ENCODE measurements at regions of chr15 and their contacts with region 1.

Region 1: DNA sequence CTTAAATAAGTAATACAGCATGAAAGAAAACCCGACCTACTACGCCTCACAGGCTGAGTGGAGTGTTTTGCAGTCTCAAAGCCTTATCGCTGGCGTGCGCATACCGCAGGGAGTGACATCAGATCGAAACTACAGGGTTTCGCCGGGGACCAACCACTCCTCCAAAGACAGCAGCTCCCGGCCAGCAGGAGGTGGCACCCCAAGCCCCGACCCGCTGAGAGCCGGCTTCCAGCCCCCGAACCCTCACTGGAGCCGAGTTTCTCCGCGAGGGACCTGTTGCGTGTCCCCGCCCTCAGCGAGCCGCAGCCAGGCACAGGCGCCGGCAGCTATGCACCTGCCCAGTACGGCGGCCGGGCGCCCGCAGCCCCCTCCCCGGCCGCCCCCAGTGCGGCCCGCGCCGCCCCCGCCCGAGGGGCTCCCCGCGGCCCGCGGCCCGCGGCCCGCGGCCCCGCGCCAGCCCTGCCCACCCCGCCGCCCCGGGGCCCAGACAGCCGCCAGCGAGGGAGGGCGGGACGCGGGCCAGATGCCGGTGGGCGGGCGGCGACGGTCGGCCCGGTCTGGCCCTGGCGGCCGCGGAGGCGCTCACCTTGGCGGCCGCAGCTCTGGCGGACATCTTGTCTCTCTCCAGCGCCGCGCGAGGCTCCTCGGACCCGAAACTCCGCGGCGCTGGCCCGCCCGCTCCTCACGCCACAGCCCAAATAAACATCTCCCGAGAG is 694 bp downstream of the TJP1 start:
- DNase-seq: peak in 8 of 10 donors; percentile 23 to 80 (median 57)
- H3K4me3 ChIP-seq: peak overlapping the region; percentile 53 to 93 (median 80)
- H3K27ac ChIP-seq: peak overlapping the region; percentile 61 to 97 (median 91)
- H3K27me3 ChIP-seq: no peaks in the 10 kb centered on the region
- CTCF ChIP-seq: peak in 13 of 56 donors; percentile 6 to 21 (median 12)

Region 2: DNA sequence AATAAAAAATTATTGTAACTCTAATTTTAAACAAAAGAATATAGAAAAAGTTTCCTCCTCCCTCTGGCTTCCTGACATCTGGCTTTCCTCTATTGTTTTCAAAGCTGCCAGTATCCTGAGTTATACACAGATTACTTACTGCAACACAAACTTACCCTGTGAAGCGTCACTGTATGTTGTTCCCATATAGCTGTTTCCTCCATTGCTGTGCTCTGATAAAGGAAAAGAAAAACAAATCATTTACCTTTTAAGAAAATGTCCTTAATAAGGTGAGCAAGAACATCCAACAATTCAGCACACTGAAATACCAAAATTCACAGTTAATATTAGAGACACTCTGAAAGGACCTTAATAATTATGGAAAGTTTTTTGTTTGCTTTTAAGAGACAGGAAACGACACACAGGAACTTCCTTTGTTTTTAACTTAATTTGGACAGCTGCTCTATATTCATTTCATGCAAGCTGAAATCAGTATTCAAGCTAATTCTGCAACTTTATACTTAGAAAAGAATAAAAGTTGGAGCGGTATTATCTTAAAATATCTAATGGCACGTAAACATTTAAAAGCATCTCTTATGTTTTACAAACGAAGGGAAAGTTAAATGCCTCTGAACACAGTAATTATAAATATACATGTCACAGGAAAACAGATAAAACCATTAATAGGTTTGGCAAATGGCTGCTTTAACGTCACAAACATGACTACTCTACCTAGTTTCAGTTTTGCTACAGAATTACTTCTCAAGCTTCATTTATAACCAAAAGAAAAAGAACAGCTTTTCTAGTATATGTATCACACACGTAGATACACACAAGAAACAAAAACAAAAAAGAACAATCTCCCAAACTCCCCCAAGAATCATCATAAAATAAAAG is 20.8 kb before region 1 on chr15:
- intact Hi-C with region 1: no loop called
- DNase-seq: no peak
- H3K4me3 ChIP-seq: peak overlapping the region in 25 of 59 donors; percentile 2 to 39 (median 10)
- H3K27ac ChIP-seq: peak overlapping the region in 50 of 59 donors; percentile 0 to 68 (median 41)
- H3K27me3 ChIP-seq: no peaks in the 10 kb centered on the region
- CTCF ChIP-seq: no peak

Region 3: DNA sequence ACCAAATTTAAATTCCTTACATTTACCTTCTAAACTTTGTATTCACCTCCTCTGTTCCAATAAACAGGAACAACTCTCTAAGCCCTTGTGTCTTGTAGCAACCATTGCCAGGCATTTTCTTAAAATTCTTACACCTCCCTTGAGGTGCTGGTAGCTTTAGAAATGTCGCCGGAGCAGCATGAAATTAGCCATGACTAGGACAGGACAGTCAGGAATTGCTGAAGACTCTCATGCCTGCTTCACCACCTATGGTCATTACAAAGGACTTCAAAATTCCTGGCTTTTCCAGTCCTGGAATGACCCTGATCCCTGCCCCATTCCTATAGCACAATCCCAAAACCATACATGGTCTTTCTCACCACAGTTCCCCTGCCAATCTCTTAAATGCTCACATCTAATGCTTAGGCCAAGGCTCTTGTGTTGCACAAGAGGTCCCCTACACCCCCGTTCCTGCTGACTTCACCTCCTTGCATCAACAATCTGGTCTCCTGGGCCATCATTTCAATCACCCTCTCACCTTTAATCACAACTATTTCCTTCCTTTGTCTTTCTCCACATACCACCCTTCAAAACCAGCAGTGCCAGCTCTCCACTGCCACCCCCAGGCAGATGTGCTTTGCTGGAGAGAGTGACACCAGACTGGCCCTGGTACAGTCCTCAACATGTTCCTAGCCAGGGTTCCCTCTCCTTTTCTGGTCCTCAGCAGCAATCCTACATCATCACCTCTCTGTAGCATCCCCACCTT is 113.9 kb after region 1 on chr15:
- intact Hi-C with region 1: loop called in 1 of 2 experiments (anchors 10 kb)
- DNase-seq: no peak
- H3K4me3 ChIP-seq: no peak overlapping the region
- H3K27ac ChIP-seq: peak overlapping the region in 44 of 59 donors; percentile 2 to 92 (median 56)
- H3K27me3 ChIP-seq: no peaks in the 10 kb centered on the region
- CTCF ChIP-seq: peak in 41 of 56 donors; percentile 8 to 64 (median 35)

Measured in dorsolateral prefrontal cortex (tissue), 120 donors.